ENCODE measurements at regions of chr6 and their contacts with region 1.

Region 1: GRCh38 chr6:116945809-116946208 is 68.8 kb downstream of the RFX6 start:
- DNase-seq: no peak
- ATAC-seq: peak in 1 of 4 donors; percentile 9
- H3K4me3 ChIP-seq: no peak overlapping the region
- H3K27ac ChIP-seq: no peak overlapping the region
- H3K4me1 ChIP-seq: no peaks in the 10 kb centered on the region
- H3K27me3 ChIP-seq: peaks cover 0 to 4% (median 0%) of the 10 kb centered on the region in 3 donors
- CTCF ChIP-seq: no peak

Region 2: GRCh38 chr6:115986026-115986425 is 959.8 kb before region 1 on chr6:
- intact Hi-C with region 1: no loop called
- DNase-seq: no peak
- ATAC-seq: no peak
- H3K4me3 ChIP-seq: no peak overlapping the region
- H3K27ac ChIP-seq: no peak overlapping the region
- H3K4me1 ChIP-seq: no peaks in the 10 kb centered on the region
- H3K27me3 ChIP-seq: no peaks in the 10 kb centered on the region
- CTCF ChIP-seq: no peak

Region 3: GRCh38 chr6:116797585-116797984 is 148.2 kb before region 1 on chr6:
- intact Hi-C with region 1: loop called in 1 of 2 experiments (anchors 10 kb)
- DNase-seq: no peak
- ATAC-seq: no peak
- H3K4me3 ChIP-seq: no peak overlapping the region
- H3K27ac ChIP-seq: no peak overlapping the region
- H3K4me1 ChIP-seq: no peaks in the 10 kb centered on the region
- H3K27me3 ChIP-seq: no peaks in the 10 kb centered on the region
- CTCF ChIP-seq: no peak

Region 4: GRCh38 chr6:117008618-117009017 is 62.8 kb after region 1 on chr6:
- intact Hi-C with region 1: no loop called
- DNase-seq: no peak
- ATAC-seq: no peak
- H3K4me3 ChIP-seq: no peak overlapping the region
- H3K27ac ChIP-seq: no peak overlapping the region
- H3K4me1 ChIP-seq: no peaks in the 10 kb centered on the region
- H3K27me3 ChIP-seq: no peaks in the 10 kb centered on the region
- CTCF ChIP-seq: no peak